Activated CD4-positive, alpha-beta T cell treated with anti-CD3 and anti-CD28 coated beads for 36 hours (primary cell): ENCODE measurements at regions of chr9 and their contacts with region 1.

Region 1: GRCh38 chr9:6941501-6941900 is 183.7 kb downstream of the KDM4C start:
- DNase-seq: no peak
- ATAC-seq: no peak
- H3K4me3 Mint-ChIP-seq: no peak overlapping the region
- H3K27ac Mint-ChIP-seq: no peak overlapping the region
- H3K4me1 Mint-ChIP-seq: peaks cover 26% of the 10 kb centered on the region
- H3K27me3 Mint-ChIP-seq: no peaks in the 10 kb centered on the region

Region 2: DNA sequence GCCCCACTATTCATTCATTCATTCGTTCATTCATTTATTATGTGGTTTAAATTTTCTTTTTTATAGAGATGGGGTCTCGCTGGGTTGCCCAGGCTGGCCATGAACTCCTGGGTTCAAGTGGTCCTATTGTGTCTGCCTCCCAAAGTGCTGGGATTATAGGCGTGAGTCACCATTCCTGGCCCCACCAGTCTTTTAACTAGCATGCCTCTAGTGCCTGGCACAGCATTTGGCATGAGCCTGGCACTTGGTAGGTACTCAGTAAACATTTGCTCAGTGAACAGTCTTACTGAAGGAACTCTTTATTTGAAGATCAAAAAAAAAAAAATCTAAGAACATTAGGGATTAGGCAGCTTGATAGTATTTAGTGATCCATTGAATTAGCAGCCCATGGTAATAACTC is 85.6 kb before region 1 on chr9:
- CTCF ChIA-PET with region 1: no interaction called
- POLR2A ChIA-PET with region 1: no interaction called
- intact Hi-C with region 1: no loop called
- DNase-seq: no peak
- ATAC-seq: no peak
- H3K4me3 Mint-ChIP-seq: no peak overlapping the region
- H3K27ac Mint-ChIP-seq: no peak overlapping the region
- H3K4me1 Mint-ChIP-seq: no peaks in the 10 kb centered on the region
- H3K27me3 Mint-ChIP-seq: no peaks in the 10 kb centered on the region

Region 3: DNA sequence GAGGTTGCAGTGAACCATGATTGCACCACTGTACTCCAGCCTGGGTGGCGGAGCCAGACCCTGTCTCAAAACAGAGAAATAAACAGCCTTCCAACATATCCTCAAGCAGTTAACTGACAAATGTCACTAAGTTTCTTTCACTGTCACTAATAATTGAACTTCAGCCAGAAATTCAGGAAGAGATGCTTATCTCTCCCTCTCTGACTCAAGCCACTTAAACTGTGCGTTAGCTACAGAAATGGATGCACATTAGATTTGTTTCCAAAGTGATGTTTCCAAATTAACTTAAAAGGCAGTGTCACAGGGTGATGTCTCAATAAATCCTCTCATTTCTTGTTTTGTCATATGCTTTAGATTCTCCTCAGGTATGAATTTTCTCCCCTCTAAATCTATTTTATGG is 18.8 kb before region 1 on chr9:
- CTCF ChIA-PET with region 1: no interaction called
- POLR2A ChIA-PET with region 1: no interaction called
- intact Hi-C with region 1: loop called in 1 of 2 experiments (anchors 1 kb)
- DNase-seq: no peak
- ATAC-seq: no peak
- H3K4me3 Mint-ChIP-seq: no peak overlapping the region
- H3K27ac Mint-ChIP-seq: peak overlapping the region; percentile 27
- H3K4me1 Mint-ChIP-seq: peaks cover 38% of the 10 kb centered on the region
- H3K27me3 Mint-ChIP-seq: no peaks in the 10 kb centered on the region